MCF 10A (cell line): ENCODE measurements at regions of chr1 and their contacts with region 1.

Region 1: GRCh38 chr1:209747580-209748262 is 8.1 kb upstream of the TRAF3IP3 start:
- DNase-seq: peak; percentile 100
- H3K4me3 Mint-ChIP-seq: no peak overlapping the region
- H3K27ac Mint-ChIP-seq: no peak overlapping the region
- H3K4me1 Mint-ChIP-seq: peaks cover 23% of the 10 kb centered on the region
- H3K27me3 Mint-ChIP-seq: no peaks in the 10 kb centered on the region
- CTCF ChIP-seq: peak; percentile 98

Region 2: GRCh38 chr1:209544098-209544497 is 203.6 kb before region 1 on chr1:
- CTCF ChIA-PET with region 1: no interaction called
- POLR2A ChIA-PET with region 1: no interaction called
- intact Hi-C with region 1: no loop called
- DNase-seq: no peak
- H3K4me3 Mint-ChIP-seq: no peak overlapping the region
- H3K27ac Mint-ChIP-seq: peak overlapping the region; percentile 68
- H3K4me1 Mint-ChIP-seq: peaks cover 43% of the 10 kb centered on the region
- H3K27me3 Mint-ChIP-seq: no peaks in the 10 kb centered on the region
- CTCF ChIP-seq: no peak

Region 3: DNA sequence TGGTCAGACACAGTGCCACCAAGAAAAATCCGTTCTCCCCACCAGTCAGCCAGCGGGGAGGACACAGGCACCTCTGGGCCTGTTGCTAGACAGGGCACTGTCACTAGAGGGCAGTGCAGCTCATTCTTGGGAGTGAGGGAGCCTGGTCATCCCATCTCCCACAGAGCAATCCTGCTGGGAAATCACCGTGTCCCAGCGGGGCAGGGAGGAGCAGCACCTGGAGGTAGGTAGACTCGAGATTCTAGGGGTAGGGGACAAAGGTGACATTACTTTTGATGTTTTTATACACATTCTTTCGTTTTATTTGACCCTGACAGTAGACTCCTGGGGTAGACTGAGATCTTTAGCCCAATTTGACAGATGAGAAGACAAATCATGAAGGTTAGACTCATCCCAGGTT is 170.9 kb before region 1 on chr1:
- CTCF ChIA-PET with region 1: interaction called, 77 read pairs
- POLR2A ChIA-PET with region 1: interaction called, 5 read pairs
- intact Hi-C with region 1: loop called (anchors 1 kb)
- DNase-seq: peak; percentile 97
- H3K4me3 Mint-ChIP-seq: no peak overlapping the region
- H3K27ac Mint-ChIP-seq: no peak overlapping the region
- H3K4me1 Mint-ChIP-seq: peaks cover 8% of the 10 kb centered on the region
- H3K27me3 Mint-ChIP-seq: peaks cover 19% of the 10 kb centered on the region
- CTCF ChIP-seq: peak; percentile 100

Region 4: GRCh38 chr1:209607102-209607794 is 140.5 kb before region 1 on chr1:
- CTCF ChIA-PET with region 1: interaction called, 207 read pairs
- POLR2A ChIA-PET with region 1: interaction called, 6 read pairs
- intact Hi-C with region 1: loop called (anchors 1 kb)
- DNase-seq: peak; percentile 92
- H3K4me3 Mint-ChIP-seq: no peak overlapping the region
- H3K27ac Mint-ChIP-seq: peak overlapping the region; percentile 81
- H3K4me1 Mint-ChIP-seq: no peaks in the 10 kb centered on the region
- H3K27me3 Mint-ChIP-seq: no peaks in the 10 kb centered on the region
- CTCF ChIP-seq: no peak

Region 5: DNA sequence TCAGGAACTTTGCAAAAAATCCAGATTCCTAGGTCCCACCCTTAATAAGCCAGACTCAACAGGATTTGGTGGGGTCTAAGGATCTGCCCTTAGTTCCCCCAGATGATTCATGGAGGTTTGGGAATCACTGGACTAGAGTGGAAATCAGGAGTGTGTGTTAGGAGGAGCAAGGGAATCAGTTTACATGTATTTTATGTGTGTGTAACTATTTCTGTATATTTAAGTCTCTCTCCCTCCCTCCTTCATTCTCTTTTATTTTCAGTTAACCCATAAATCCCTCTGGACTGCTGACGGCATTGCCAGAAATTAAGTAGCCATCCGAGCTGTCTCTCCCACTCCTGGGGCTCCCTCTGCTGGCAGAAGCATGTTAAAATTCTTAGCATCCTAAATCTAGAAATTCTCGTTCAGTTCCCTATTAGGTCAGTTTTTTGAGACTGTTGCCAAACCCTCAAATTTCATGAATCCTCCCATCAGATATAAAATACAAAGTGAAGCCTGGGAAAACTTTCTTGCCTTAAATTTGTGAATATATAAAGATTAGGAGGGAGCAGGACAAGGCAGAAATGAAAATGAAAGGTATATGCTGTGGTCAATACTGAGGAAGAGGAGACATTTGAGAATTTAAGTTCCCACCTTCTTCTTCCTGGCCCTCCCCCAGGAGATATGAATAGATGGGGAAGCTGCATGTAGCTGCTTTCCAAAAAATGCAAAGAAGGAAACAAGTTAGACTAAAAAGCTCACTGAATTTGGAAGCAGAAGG is 54.8 kb before region 1 on chr1:
- CTCF ChIA-PET with region 1: interaction called, 16 read pairs
- POLR2A ChIA-PET with region 1: interaction called, 4 read pairs
- intact Hi-C with region 1: loop called (anchors 1 kb)
- DNase-seq: peak; percentile 98
- H3K4me3 Mint-ChIP-seq: no peak overlapping the region
- H3K27ac Mint-ChIP-seq: peak overlapping the region; percentile 55
- H3K4me1 Mint-ChIP-seq: peaks cover 64% of the 10 kb centered on the region
- H3K27me3 Mint-ChIP-seq: peaks cover 17% of the 10 kb centered on the region
- CTCF ChIP-seq: peak; percentile 100

Region 6: GRCh38 chr1:209769171-209769904 is 21.6 kb after region 1 on chr1:
- CTCF ChIA-PET with region 1: interaction called, 99 read pairs
- POLR2A ChIA-PET with region 1: interaction called, 6 read pairs
- intact Hi-C with region 1: no loop called
- DNase-seq: peak; percentile 97
- H3K4me3 Mint-ChIP-seq: no peak overlapping the region
- H3K27ac Mint-ChIP-seq: no peak overlapping the region
- H3K4me1 Mint-ChIP-seq: peaks cover 17% of the 10 kb centered on the region
- H3K27me3 Mint-ChIP-seq: no peaks in the 10 kb centered on the region
- CTCF ChIP-seq: no peak

Region 7: GRCh38 chr1:209805875-209806760 is 58.4 kb after region 1 on chr1 and contains the start of gene IRF6:
- CTCF ChIA-PET with region 1: interaction called, 10 read pairs
- POLR2A ChIA-PET with region 1: interaction called, 8 read pairs
- intact Hi-C with region 1: no loop called
- DNase-seq: peak; percentile 99
- H3K4me3 Mint-ChIP-seq: peak within 1 kb of the TSS; percentile 90
- H3K27ac Mint-ChIP-seq: peak within 1 kb of the TSS; percentile 92
- H3K4me1 Mint-ChIP-seq: peaks cover 74% of the 10 kb centered on the region
- H3K27me3 Mint-ChIP-seq: no peaks in the 10 kb centered on the region
- CTCF ChIP-seq: no peak
- total RNA-seq, gene IRF6: 87.8 and 106 TPM in 2 replicates